Aorta (tissue), 5 donors: ENCODE measurements at regions of chr2 and their contacts with region 1.

Region 1: DNA sequence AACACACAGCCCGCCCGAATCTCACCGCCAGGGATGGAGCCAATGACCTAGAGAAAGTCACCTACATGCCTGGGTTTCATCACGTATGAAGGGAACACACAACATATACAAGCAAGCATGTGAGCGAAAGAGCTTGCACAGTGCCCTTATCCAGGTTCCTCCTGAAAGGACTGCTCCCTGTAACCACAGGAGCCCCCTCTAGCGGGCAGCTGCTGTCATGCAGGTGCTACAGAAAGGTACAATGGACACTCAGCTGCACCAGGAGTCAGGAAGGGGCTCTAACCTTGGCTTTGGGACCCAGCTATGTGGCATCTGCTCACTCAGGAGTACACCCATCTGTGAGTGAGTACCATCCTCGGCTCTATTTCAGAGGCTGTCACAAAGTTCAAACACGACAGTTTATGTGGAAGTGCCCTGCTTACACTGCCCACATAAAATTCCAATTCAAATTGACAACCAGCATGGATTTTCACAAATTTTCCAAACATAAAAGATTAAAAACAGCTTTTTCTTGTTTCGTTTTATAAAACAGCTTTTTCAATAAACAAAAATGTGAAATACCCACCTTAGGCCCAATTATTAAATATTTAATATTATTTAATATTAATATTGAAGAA is 3.5 kb downstream of the NDUFA10 start:
- DNase-seq: peak; percentile 64 to 80
- ATAC-seq: no peak
- H3K4me3 ChIP-seq: no peak overlapping the region
- H3K27ac ChIP-seq: no peak overlapping the region
- H3K4me1 ChIP-seq: no peaks in the 10 kb centered on the region
- H3K27me3 ChIP-seq: no peaks in the 10 kb centered on the region

Region 2: DNA sequence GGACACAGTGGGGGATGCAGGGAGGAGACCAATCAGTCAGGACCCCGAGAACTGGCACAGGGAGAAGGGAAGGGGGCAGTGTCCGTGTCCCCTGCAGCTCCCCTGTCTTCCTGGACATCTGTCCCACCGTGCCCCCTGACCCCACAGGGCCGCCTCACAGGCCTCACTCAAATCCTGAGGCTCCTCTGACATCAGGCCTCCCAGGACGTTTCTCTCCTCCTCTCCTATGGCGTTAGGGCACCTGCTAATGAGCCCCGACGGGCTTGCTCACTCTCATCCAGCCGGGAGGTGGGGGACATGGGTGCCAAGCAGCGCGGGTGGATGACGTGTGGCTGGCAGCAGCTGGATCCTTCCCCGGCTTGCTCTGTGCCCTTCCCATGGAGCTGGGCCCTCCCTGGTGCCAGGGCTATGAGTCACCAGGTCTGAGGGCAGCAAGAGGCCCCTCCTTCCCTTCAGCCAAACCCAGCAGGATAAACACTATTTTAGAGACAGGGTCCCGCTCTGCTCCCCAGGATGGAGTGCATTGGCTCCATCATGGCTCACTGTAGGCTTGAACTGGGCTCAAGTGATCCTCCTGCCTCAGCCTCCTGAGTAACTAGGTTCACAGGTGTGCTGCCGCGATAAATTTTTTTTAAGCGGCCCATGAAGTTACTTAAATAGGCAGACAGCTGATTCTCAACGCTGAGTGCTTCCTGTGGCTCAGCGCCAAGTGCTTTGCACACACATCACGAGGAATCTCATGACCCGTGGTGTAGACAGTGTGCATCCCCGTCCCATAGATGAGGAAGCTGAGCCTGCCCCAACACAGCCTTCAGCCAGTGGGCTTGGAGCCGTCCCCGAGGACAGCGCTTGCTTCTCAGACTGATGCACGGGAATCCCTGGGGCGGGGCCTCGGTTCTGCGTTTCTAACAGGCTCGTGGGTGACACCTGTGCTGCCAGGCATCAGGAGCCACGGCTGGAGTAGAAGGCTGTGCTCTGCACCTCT is 556.3 kb before region 1 on chr2:
- intact Hi-C with region 1: loop called in 1 of 2 experiments (anchors 10 kb)
- DNase-seq: peak; percentile 93 to 94
- ATAC-seq: peak; percentile 75
- H3K4me3 ChIP-seq: no peak overlapping the region
- H3K27ac ChIP-seq: no peak overlapping the region
- H3K4me1 ChIP-seq: no peaks in the 10 kb centered on the region
- H3K27me3 ChIP-seq: no peaks in the 10 kb centered on the region

Region 3: DNA sequence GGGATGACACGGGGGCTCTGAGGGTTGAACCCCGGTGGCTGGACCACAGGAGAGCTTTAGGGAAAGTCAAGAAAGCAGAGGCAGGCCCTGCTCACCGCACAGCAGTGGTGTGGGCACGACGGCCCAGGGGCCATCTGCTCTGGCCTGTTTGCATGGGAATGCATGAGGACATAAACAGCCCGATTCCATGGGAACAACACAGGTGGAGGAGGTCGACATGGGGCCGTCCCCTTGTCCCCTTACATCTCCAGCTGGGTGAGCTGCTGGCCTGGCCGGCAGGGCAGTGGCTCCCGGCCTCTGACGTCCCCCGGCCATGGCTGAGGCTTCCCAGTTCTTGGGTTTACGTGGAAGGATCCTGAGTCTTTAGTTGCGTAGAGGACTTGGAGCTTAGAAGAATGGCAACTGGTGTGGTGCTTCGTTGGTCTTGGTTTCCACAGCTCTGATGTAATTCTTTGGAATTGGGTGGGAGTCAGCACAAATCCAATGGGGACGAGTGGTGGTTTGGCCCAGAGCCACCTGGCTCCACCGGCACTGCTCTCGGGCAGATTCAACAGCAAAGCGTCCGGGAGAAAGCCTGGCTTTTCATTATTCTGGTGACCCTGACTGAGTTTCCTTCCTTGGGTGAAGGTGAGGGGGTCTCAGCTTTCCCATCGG is 522.5 kb before region 1 on chr2:
- intact Hi-C with region 1: no loop called
- DNase-seq: peak; percentile 81 to 89
- ATAC-seq: peak; percentile 61
- H3K4me3 ChIP-seq: no peak overlapping the region
- H3K27ac ChIP-seq: no peak overlapping the region
- H3K4me1 ChIP-seq: no peaks in the 10 kb centered on the region
- H3K27me3 ChIP-seq: no peaks in the 10 kb centered on the region